ENCODE measurements at regions of chr21 and their contacts with region 1.

Region 1: GRCh38 chr21:33199516-33200217 is 30.1 kb upstream of the IFNAR2 start:
- DNase-seq: peak; percentile 63 to 92 (median 82)
- ATAC-seq: peak; percentile 93
- H3K4me3 ChIP-seq: no peak overlapping the region
- H3K4me3 Mint-ChIP-seq: no peak overlapping the region
- H3K27ac ChIP-seq: no peak overlapping the region
- H3K27ac Mint-ChIP-seq: peak overlapping the region; percentile 84
- H3K4me1 ChIP-seq: peaks cover 19% of the 10 kb centered on the region
- H3K4me1 Mint-ChIP-seq: peaks cover 28% of the 10 kb centered on the region
- H3K27me3 ChIP-seq: no peaks in the 10 kb centered on the region
- H3K27me3 Mint-ChIP-seq: no peaks in the 10 kb centered on the region
- CTCF ChIP-seq: peak; percentile 77

Region 2: GRCh38 chr21:32834916-32835235 is 364.8 kb before region 1 on chr21:
- CTCF ChIA-PET with region 1: interaction called, 29 read pairs
- POLR2A ChIA-PET with region 1: no interaction called
- intact Hi-C with region 1: loop called (anchors 1 kb)
- DNase-seq: no peak
- ATAC-seq: no peak
- H3K4me3 ChIP-seq: no peak overlapping the region
- H3K4me3 Mint-ChIP-seq: no peak overlapping the region
- H3K27ac ChIP-seq: no peak overlapping the region
- H3K27ac Mint-ChIP-seq: no peak overlapping the region
- H3K4me1 ChIP-seq: no peaks in the 10 kb centered on the region
- H3K4me1 Mint-ChIP-seq: no peaks in the 10 kb centered on the region
- H3K27me3 ChIP-seq: peaks cover 0 to 2% of the 10 kb centered on the region in 2 experiments
- H3K27me3 Mint-ChIP-seq: no peaks in the 10 kb centered on the region
- CTCF ChIP-seq: no peak

Region 3: GRCh38 chr21:32994305-32994704 is 205.4 kb before region 1 on chr21:
- CTCF ChIA-PET with region 1: interaction called, 28 read pairs
- POLR2A ChIA-PET with region 1: no interaction called
- intact Hi-C with region 1: no loop called
- DNase-seq: peak in 1 of 9 experiments; percentile 11
- ATAC-seq: no peak
- H3K4me3 ChIP-seq: no peak overlapping the region
- H3K4me3 Mint-ChIP-seq: no peak overlapping the region
- H3K27ac ChIP-seq: no peak overlapping the region
- H3K27ac Mint-ChIP-seq: no peak overlapping the region
- H3K4me1 ChIP-seq: no peaks in the 10 kb centered on the region
- H3K4me1 Mint-ChIP-seq: no peaks in the 10 kb centered on the region
- H3K27me3 ChIP-seq: no peaks in the 10 kb centered on the region
- H3K27me3 Mint-ChIP-seq: peaks cover 26% of the 10 kb centered on the region
- CTCF ChIP-seq: no peak

Region 4: DNA sequence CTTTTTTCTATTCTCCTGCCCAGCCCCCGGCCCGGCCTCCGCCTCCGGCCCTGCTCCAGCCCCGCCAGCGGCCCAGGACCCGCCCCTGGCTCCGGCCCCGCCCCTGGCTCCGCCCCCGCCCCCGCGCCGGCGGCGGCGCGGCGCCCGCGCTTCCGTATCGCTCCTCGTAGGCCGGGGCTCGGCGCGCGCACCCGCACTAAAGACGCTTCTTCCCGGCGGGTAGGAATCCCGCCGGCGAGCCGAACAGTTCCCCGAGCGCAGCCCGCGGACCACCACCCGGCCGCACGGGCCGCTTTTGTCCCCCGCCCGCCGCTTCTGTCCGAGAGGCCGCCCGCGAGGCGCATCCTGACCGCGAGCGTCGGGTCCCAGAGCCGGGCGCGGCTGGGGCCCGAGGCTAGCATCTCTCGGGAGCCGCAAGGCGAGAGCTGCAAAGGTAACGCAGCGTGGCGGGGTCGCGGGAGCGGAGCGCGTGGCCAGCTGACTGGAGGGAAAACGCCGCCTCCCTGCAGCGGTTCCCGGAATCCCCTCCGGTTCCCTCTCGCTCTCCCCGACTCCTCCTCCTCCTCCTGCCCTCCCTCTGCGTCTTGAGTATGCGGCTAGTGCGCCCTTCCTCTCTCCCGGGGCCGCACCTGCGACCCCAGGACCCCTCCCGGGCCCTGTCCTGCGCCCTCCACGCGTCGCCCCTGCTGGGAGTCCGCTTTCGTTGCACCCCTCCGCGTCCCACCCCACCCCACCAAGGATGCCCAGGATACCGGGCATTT is 30.3 kb after region 1 on chr21 and contains the start of gene IFNAR2:
- CTCF ChIA-PET with region 1: interaction called, 6 read pairs
- POLR2A ChIA-PET with region 1: interaction called, 3 read pairs
- intact Hi-C with region 1: loop called (anchors 1 to 2 kb)
- DNase-seq: peak; percentile 56 to 85 (median 74)
- ATAC-seq: peak; percentile 86
- H3K4me3 ChIP-seq: peak within 1 kb of the TSS; percentile 90 to 97
- H3K4me3 Mint-ChIP-seq: peak within 1 kb of the TSS; percentile 92
- H3K27ac ChIP-seq: peak within 1 kb of the TSS; percentile 74 to 75
- H3K27ac Mint-ChIP-seq: peak within 1 kb of the TSS; percentile 95
- H3K4me1 ChIP-seq: peaks cover 46% of the 10 kb centered on the region
- H3K4me1 Mint-ChIP-seq: peaks cover 51% of the 10 kb centered on the region
- H3K27me3 ChIP-seq: no peaks in the 10 kb centered on the region
- H3K27me3 Mint-ChIP-seq: no peaks in the 10 kb centered on the region
- CTCF ChIP-seq: no peak
- total RNA-seq, gene IFNAR2: 21.9 to 30.0 TPM

Region 5: GRCh38 chr21:33324291-33325221 is 124.9 kb after region 1 on chr21 and contains the start of gene IFNAR1:
- CTCF ChIA-PET with region 1: interaction called, 7 read pairs
- POLR2A ChIA-PET with region 1: interaction called, 5 read pairs
- intact Hi-C with region 1: loop called in 1 of 2 experiments (anchors 5 kb)
- DNase-seq: peak; percentile 98 to 100 (median 99)
- ATAC-seq: peak; percentile 92
- H3K4me3 ChIP-seq: peak within 1 kb of the TSS; percentile 80 to 92
- H3K4me3 Mint-ChIP-seq: no peak within 1 kb of the TSS
- H3K27ac ChIP-seq: peak within 1 kb of the TSS; percentile 88 to 92
- H3K27ac Mint-ChIP-seq: no peak within 1 kb of the TSS
- H3K4me1 ChIP-seq: peaks cover 31% of the 10 kb centered on the region
- H3K4me1 Mint-ChIP-seq: peaks cover 30% of the 10 kb centered on the region
- H3K27me3 ChIP-seq: no peaks in the 10 kb centered on the region
- H3K27me3 Mint-ChIP-seq: no peaks in the 10 kb centered on the region
- CTCF ChIP-seq: no peak
- total RNA-seq, gene IFNAR1: 15.1 to 18.6 TPM

Region 6: GRCh38 chr21:33374450-33375096 is 174.9 kb after region 1 on chr21:
- CTCF ChIA-PET with region 1: interaction called, 32 read pairs
- POLR2A ChIA-PET with region 1: no interaction called
- intact Hi-C with region 1: loop called (anchors 1 kb)
- DNase-seq: peak in 7 of 9 experiments; percentile 38 to 75 (median 67)
- ATAC-seq: peak; percentile 85
- H3K4me3 ChIP-seq: no peak overlapping the region
- H3K4me3 Mint-ChIP-seq: no peak overlapping the region
- H3K27ac ChIP-seq: no peak overlapping the region
- H3K27ac Mint-ChIP-seq: no peak overlapping the region
- H3K4me1 ChIP-seq: peaks cover 9% of the 10 kb centered on the region
- H3K4me1 Mint-ChIP-seq: peaks cover 12% of the 10 kb centered on the region
- H3K27me3 ChIP-seq: peaks cover 0 to 13% of the 10 kb centered on the region in 2 experiments
- H3K27me3 Mint-ChIP-seq: peaks cover 3% of the 10 kb centered on the region
- CTCF ChIP-seq: peak; percentile 66

Measured in CD8-positive, alpha-beta T cell (primary cell).